HEK293 (cell line): ENCODE measurements at regions of chr17 and their contacts with region 1.

Region 1: GRCh38 chr17:76868176-76868668 is at the start of gene MGAT5B:
- H3K4me3 ChIP-seq: peak within 1 kb of the TSS; percentile 34
- H3K27ac ChIP-seq: peak within 1 kb of the TSS; percentile 59; the same call in 1 of the 2 replicates
- H3K4me1 ChIP-seq: no peaks in the 10 kb centered on the region; the same call in 1 of the 2 replicates
- CTCF ChIP-seq: peak; percentile 44; the same call in 1 of the 2 replicates

Region 2: GRCh38 chr17:76879691-76880090 is 11.5 kb after region 1 on chr17:
- CTCF ChIA-PET with region 1: interaction called, 15 read pairs
- POLR2A ChIA-PET with region 1: interaction called, 3 read pairs
- H3K4me3 ChIP-seq: no peak overlapping the region
- H3K27ac ChIP-seq: no peak overlapping the region
- H3K4me1 ChIP-seq: no peaks in the 10 kb centered on the region
- CTCF ChIP-seq: no peak

Region 3: DNA sequence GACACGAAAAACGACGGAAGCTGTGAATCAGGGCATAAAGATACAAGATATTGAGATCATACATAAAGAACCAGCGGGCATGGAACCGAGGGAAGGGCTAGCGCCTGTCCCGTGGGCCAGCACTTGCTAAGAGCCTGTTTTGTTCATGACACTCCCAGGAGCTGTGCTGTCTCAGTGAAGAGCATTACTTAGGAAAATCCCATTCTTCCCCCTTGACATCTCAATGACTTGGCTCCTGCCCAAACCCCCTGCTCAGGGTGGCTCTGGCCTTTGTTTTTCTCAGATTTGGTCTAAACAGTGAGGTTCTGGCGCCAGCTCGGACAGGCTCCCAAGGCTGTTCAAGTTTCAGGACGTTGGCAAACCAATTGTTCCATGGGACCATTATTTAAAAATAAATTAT is 193.4 kb after region 1 on chr17:
- CTCF ChIA-PET with region 1: interaction called, 61 read pairs
- POLR2A ChIA-PET with region 1: interaction called, 9 read pairs
- H3K4me3 ChIP-seq: no peak overlapping the region
- H3K27ac ChIP-seq: no peak overlapping the region
- H3K4me1 ChIP-seq: no peaks in the 10 kb centered on the region
- CTCF ChIP-seq: no peak

Region 4: GRCh38 chr17:77068915-77069314 is 200.7 kb after region 1 on chr17:
- CTCF ChIA-PET with region 1: interaction called, 29 read pairs
- POLR2A ChIA-PET with region 1: no interaction called
- H3K4me3 ChIP-seq: no peak overlapping the region
- H3K27ac ChIP-seq: no peak overlapping the region
- H3K4me1 ChIP-seq: no peaks in the 10 kb centered on the region
- CTCF ChIP-seq: no peak